ENCODE measurements at regions of chr3 and their contacts with region 1.

Region 1: GRCh38 chr3:140051019-140051957 is 116.3 kb downstream of the CLSTN2 start:
- DNase-seq: peak in 1 of 2 donors; percentile 13
- ATAC-seq: peak in 3 of 8 donors; percentile 53 to 65 (median 61)
- H3K4me3 ChIP-seq: no peak overlapping the region
- H3K27ac ChIP-seq: no peak overlapping the region
- H3K4me1 ChIP-seq: no peaks in the 10 kb centered on the region
- H3K27me3 ChIP-seq: no peaks in the 10 kb centered on the region
- CTCF ChIP-seq: peak; percentile 13 to 64 (median 49)

Region 2: GRCh38 chr3:139434764-139435307 is 616.5 kb before region 1 on chr3:
- intact Hi-C with region 1: loop called in 1 of 10 experiments (anchors 10 kb)
- DNase-seq: peak in 1 of 2 donors; percentile 16
- ATAC-seq: peak in 3 of 8 donors; percentile 31 to 67 (median 62)
- H3K4me3 ChIP-seq: no peak overlapping the region
- H3K27ac ChIP-seq: peak overlapping the region in 1 of 10 donors; percentile 80
- H3K4me1 ChIP-seq: peaks cover 0 to 12% (median 0%) of the 10 kb centered on the region in 9 donors
- H3K27me3 ChIP-seq: no peaks in the 10 kb centered on the region
- CTCF ChIP-seq: no peak

Region 3: DNA sequence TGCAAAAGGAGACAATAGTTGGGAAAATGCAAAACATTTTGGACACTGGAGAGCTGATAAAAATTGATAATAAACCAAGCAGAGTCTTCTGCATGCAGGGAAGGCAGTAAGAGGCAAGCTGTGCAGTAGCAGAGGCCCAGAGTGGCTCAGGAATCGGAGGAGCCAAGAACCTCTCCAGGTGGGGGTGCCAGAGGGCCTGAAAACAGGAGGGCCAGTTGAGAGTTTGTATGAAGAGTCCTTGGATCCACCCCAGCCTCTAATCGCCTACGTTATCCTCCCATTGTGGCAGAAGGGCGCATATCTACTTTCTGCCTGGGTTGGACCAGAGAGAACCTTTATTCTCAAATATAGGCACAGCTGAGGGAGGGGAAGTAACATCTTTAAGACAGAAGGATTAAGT is 462.8 kb before region 1 on chr3:
- intact Hi-C with region 1: loop called in 1 of 10 experiments (anchors 5 kb)
- DNase-seq: peak; percentile 20 to 21
- ATAC-seq: peak in 5 of 8 donors; percentile 57 to 80 (median 73)
- H3K4me3 ChIP-seq: no peak overlapping the region
- H3K27ac ChIP-seq: no peak overlapping the region
- H3K4me1 ChIP-seq: peaks cover 0 to 7% (median 0%) of the 10 kb centered on the region in 9 donors
- H3K27me3 ChIP-seq: no peaks in the 10 kb centered on the region
- CTCF ChIP-seq: peak in 7 of 9 donors; percentile 9 to 47 (median 32)

Region 4: DNA sequence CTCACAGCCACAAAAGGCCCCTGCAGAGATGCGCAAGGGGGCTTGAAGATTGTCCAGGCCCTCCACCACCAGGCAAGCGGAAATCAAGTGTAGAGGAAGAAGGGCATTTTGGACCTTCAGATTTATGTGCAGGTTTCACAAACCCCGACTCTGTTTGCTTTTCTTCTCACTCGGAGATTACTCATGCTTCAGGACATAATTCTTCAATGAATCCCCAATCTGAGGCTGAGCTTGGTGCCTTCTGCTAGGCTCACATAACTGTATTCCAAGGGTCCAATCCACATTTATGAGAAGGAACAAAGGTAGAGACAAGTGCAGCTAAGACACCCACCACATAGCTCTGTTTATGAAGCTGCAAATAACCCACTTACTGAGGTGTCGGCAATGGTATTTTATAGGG is 322.9 kb before region 1 on chr3:
- intact Hi-C with region 1: no loop called
- DNase-seq: no peak
- ATAC-seq: no peak
- H3K4me3 ChIP-seq: no peak overlapping the region
- H3K27ac ChIP-seq: no peak overlapping the region
- H3K4me1 ChIP-seq: no peaks in the 10 kb centered on the region
- H3K27me3 ChIP-seq: peaks cover 0 to under 1% (median 0%) of the 10 kb centered on the region in 7 donors
- CTCF ChIP-seq: no peak

Region 5: GRCh38 chr3:139940622-139941021 is 110.7 kb before region 1 on chr3:
- intact Hi-C with region 1: loop called in 6 of 10 experiments (anchors 2 to 5 kb)
- DNase-seq: peak in 1 of 2 donors; percentile 17
- ATAC-seq: peak in 6 of 8 donors; percentile 63 to 89 (median 76)
- H3K4me3 ChIP-seq: no peak overlapping the region
- H3K27ac ChIP-seq: peak overlapping the region in 1 of 10 donors; percentile 26
- H3K4me1 ChIP-seq: peaks cover 0 to 40% (median 12%) of the 10 kb centered on the region in 9 donors
- H3K27me3 ChIP-seq: peaks cover 0 to 30% (median 9%) of the 10 kb centered on the region in 7 donors
- CTCF ChIP-seq: no peak

Measured in heart right ventricle (tissue), 16 donors.